HCT116 (cell line): ENCODE measurements at regions of chr11 and their contacts with region 1.

Region 1: GRCh38 chr11:64713031-64713780 is 9.8 kb downstream of the NRXN2 start:
- DNase-seq: no peak
- ATAC-seq: no peak
- H3K4me3 ChIP-seq: no peak overlapping the region
- H3K27ac ChIP-seq: no peak overlapping the region
- H3K4me1 ChIP-seq: peaks cover 7 to 23% of the 10 kb centered on the region in 2 experiments; a peak in 3 of 4 replicates
- H3K27me3 ChIP-seq: peaks cover 5% of the 10 kb centered on the region; the same call in 1 of the 2 replicates
- CTCF ChIP-seq: no peak
- POLR2A ChIP-seq: no peak
- RAD21 ChIP-seq: no peak

Region 2: GRCh38 chr11:63508009-63508408 is 1205.2 kb before region 1 on chr11:
- CTCF ChIA-PET with region 1: no interaction called
- POLR2A ChIA-PET with region 1: no interaction called
- RAD21 ChIA-PET with region 1: no interaction called
- intact Hi-C with region 1: loop called (anchors 10 kb)
- DNase-seq: peak; percentile 28
- ATAC-seq: peak; percentile 98
- H3K4me3 ChIP-seq: no peak overlapping the region
- H3K27ac ChIP-seq: no peak overlapping the region
- H3K4me1 ChIP-seq: no peaks in the 10 kb centered on the region
- H3K27me3 ChIP-seq: no peaks in the 10 kb centered on the region
- CTCF ChIP-seq: peak; percentile 46 to 68 (median 56); a peak in 5 of 6 replicates
- POLR2A ChIP-seq: no peak
- RAD21 ChIP-seq: peak; percentile 66